ENCODE measurements at regions of chr2 and their contacts with region 1.

Region 1: GRCh38 chr2:38515160-38516074 is 87.3 kb downstream of the HNRNPLL start:
- DNase-seq: peak in 9 of 10 donors; percentile 28 to 75 (median 61)
- H3K4me3 ChIP-seq: peak overlapping the region in 36 of 59 donors; percentile 0 to 54 (median 30)
- H3K27ac ChIP-seq: peak overlapping the region in 39 of 59 donors; percentile 7 to 79 (median 49)
- H3K27me3 ChIP-seq: peaks cover 0 to 16% (median 0%) of the 10 kb centered on the region in 45 donors
- CTCF ChIP-seq: no peak

Region 2: DNA sequence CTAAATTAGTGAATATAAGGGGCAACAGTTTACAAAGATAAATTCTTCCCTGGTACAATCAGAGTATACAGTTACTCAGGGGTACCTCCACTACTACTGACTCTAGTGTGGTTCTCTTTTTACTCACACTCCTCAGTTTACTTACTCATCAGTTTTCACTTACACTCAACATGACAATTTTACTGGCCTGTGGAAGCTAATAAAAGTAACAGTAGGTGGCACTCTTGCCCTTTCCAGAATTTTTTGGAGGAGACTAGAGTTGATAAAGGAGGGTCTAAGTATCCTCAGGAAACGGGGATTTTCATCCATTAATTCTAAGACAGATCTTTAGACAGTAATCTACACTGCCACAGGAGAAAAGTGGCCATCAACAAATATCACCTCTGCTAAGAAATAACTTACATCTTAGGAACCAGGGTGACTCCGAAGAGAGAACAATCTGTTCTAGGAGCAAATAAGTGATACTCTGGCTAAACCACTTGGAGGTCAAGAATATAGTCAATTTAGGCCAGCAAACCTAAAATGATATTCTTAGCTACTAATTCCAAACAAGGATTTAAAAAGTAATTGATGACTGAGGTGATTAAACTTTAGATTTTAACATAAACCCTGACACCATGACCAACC is 199.6 kb before region 1 on chr2:
- intact Hi-C with region 1: loop called in 1 of 2 experiments (anchors 10 kb)
- DNase-seq: no peak
- H3K4me3 ChIP-seq: no peak overlapping the region
- H3K27ac ChIP-seq: no peak overlapping the region
- H3K27me3 ChIP-seq: no peaks in the 10 kb centered on the region
- CTCF ChIP-seq: peak; percentile 44 to 89 (median 72)

Region 3: DNA sequence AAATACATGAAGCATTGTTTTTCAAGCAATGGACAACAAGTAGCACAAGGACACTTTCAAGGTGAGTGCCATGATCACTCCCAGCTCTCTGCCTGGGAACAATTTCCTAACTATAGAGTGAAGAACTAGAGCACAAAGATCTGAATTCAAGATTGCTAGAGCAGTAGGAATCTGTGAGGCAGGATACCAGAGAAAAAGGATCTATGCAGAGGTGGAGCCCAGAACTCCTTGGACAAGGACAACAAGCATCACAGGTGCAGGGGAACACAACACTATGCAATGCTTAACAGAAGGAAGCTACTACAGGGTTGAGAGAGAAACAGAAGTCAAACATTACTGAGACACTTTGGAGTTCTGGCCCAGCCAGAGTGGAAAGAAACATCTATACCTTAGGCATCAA is 163.1 kb before region 1 on chr2:
- intact Hi-C with region 1: no loop called
- DNase-seq: no peak
- H3K4me3 ChIP-seq: no peak overlapping the region
- H3K27ac ChIP-seq: no peak overlapping the region
- H3K27me3 ChIP-seq: no peaks in the 10 kb centered on the region
- CTCF ChIP-seq: no peak

Region 4: DNA sequence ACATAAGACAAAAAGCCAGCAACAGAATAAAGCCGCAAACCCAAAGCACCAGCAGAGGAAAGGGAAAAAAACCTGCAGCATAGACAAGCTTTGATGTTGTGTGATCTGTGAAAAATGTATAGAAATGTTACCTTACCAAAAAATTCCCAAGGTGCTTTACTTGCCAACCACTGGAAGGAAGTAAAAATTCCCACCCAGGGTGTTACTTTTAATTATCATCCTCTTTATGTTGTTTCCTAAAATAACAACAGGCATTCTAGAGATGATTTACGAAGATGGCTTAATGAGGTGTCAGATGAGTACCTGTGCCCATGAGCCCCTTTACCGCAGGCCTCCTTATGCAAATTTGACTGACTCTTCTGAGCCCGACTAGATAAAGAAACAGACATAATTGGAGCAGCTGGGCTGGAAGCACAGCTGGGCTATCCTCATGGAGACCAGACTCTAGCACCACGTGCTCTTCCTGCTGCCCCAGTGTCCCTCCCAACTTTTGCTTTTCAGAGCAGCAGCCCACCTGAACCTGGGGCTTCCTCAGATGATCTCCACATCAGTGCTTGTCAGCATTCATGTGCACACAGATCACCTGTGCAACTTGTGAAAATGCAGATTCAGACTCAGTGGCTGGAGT is 194.3 kb after region 1 on chr2:
- intact Hi-C with region 1: no loop called
- DNase-seq: no peak
- H3K4me3 ChIP-seq: no peak overlapping the region
- H3K27ac ChIP-seq: no peak overlapping the region
- H3K27me3 ChIP-seq: no peaks in the 10 kb centered on the region
- CTCF ChIP-seq: no peak

Measured in dorsolateral prefrontal cortex (tissue), 120 donors.